ENCODE measurements at regions of chr22 and their contacts with region 1.

Region 1: DNA sequence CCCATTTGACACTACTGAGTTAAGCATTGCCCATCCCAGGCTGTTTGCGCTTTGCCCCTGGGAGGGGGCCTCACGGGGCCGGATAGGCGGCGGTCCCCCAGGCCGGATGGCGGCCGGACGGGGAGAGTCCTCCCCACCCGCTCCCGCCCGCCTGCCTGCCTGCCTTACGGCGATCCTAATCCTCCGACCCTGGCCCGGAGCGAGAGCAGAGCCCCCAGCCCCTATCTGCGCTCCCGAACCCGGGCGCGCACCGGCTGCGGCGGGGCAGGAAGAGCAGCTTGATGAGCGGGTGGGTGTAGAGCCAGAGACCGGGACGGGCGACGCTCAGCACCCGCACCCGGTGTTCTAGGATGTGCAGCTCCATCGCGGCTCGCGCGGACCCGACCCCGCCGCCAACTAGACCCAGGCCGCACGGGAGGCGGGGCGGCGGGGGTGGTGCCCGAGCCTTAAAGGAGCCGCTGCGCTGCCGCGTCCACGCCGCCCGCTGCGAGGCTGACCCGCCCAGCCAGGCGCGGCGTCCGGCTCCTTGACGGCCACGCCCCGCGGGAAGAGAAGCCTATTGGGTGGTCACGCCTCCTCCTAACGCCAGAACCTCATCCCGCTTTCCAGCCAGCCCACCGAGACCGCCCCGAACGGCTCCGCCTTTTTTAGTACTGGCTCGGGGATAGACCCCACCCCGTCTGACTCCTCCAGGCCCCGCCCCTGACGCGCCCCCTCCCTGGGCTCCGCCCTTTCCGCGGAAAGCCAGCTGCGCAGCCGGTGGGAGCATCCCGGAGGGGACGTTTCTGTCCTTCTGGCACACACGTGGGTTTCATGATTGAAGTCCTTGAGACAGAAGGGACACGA is at the start of gene CASTOR1:
- DNase-seq: peak; percentile 98
- H3K4me3 ChIP-seq: peak within 1 kb of the TSS; percentile 80
- H3K4me3 Mint-ChIP-seq: peak within 1 kb of the TSS; percentile 81
- H3K27ac Mint-ChIP-seq: peak within 1 kb of the TSS; percentile 77
- H3K4me1 ChIP-seq: peaks cover 4% of the 10 kb centered on the region
- H3K4me1 Mint-ChIP-seq: peaks cover 11% of the 10 kb centered on the region
- H3K27me3 ChIP-seq: no peaks in the 10 kb centered on the region
- H3K27me3 Mint-ChIP-seq: no peaks in the 10 kb centered on the region
- CTCF ChIP-seq: no peak
- total RNA-seq, gene CASTOR1: 6.3 and 7.4 TPM in 2 replicates

Region 2: DNA sequence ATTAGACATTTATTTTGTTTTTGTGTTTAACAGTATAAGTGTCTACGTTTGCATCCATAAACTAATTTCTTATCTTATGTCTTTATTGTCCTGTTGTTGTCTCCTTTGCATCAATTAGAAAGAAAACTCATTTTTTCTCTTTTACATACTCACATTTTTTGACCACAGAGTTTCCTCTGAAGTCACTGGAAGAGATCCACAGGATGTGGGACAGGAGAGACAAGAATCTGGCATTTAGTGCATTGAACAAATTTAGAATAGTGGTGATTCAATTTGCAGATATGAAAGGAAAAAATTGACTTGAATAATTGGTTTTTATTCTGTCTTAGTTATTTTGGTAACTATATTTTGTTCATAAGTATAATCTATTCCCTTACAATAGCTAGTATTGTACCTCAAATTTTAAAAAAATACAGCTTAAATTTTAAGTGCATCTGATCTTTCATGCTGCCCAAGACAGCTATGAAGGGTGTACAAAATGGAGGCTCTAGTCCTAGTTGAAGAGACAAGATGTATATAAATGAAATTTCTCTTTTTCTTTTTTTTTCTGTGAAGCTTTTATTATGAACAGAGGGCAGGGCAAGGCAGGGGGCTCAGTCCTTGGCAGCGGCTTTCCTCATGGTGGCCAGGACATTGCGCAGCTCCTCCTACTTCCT is 184.7 kb before region 1 on chr22:
- CTCF ChIA-PET with region 1: interaction called, 10 read pairs
- POLR2A ChIA-PET with region 1: no interaction called
- intact Hi-C with region 1: loop called (anchors 1 kb)
- DNase-seq: no peak
- H3K4me3 ChIP-seq: no peak overlapping the region
- H3K4me3 Mint-ChIP-seq: no peak overlapping the region
- H3K27ac Mint-ChIP-seq: no peak overlapping the region
- H3K4me1 ChIP-seq: no peaks in the 10 kb centered on the region
- H3K4me1 Mint-ChIP-seq: peaks cover 11% of the 10 kb centered on the region
- H3K27me3 ChIP-seq: no peaks in the 10 kb centered on the region
- H3K27me3 Mint-ChIP-seq: no peaks in the 10 kb centered on the region
- CTCF ChIP-seq: no peak

Region 3: GRCh38 chr22:30277547-30278344 is 11.6 kb before region 1 on chr22:
- CTCF ChIA-PET with region 1: interaction called, 12 read pairs
- POLR2A ChIA-PET with region 1: no interaction called
- intact Hi-C with region 1: no loop called
- DNase-seq: peak in 1 of 2 experiments; percentile 55
- H3K4me3 ChIP-seq: no peak overlapping the region
- H3K4me3 Mint-ChIP-seq: no peak overlapping the region
- H3K27ac Mint-ChIP-seq: peak overlapping the region; percentile 81
- H3K4me1 ChIP-seq: peaks cover 19% of the 10 kb centered on the region
- H3K4me1 Mint-ChIP-seq: peaks cover 11% of the 10 kb centered on the region
- H3K27me3 ChIP-seq: no peaks in the 10 kb centered on the region
- H3K27me3 Mint-ChIP-seq: no peaks in the 10 kb centered on the region
- CTCF ChIP-seq: no peak

Region 4: DNA sequence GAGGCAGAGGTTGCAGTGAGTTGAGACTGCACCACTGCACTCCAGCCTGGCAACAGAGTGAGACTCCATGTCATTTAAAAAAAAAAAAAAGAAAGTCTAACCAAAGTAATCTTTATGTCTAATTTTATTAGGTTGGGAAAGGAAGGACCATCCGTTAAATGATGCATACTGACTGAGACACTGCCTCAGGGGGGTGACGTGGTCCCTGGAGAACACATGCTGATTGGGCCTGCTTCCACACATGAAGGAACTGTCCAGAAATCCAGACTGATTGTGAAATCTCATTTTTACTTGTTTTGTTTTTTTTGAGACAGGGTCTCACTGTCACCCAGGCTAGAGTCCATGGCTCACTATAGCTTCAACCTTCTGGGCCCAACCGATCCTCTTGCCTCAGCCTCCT is 61.9 kb after region 1 on chr22:
- CTCF ChIA-PET with region 1: interaction called, 6 read pairs
- POLR2A ChIA-PET with region 1: interaction called, 5 read pairs
- intact Hi-C with region 1: loop called (anchors 5 kb)
- DNase-seq: no peak
- H3K4me3 ChIP-seq: no peak overlapping the region
- H3K4me3 Mint-ChIP-seq: peak overlapping the region; percentile 51
- H3K27ac Mint-ChIP-seq: peak overlapping the region; percentile 70
- H3K4me1 ChIP-seq: peaks cover 38% of the 10 kb centered on the region
- H3K4me1 Mint-ChIP-seq: peaks cover 35% of the 10 kb centered on the region
- H3K27me3 ChIP-seq: no peaks in the 10 kb centered on the region
- H3K27me3 Mint-ChIP-seq: no peaks in the 10 kb centered on the region
- CTCF ChIP-seq: no peak

Region 5: DNA sequence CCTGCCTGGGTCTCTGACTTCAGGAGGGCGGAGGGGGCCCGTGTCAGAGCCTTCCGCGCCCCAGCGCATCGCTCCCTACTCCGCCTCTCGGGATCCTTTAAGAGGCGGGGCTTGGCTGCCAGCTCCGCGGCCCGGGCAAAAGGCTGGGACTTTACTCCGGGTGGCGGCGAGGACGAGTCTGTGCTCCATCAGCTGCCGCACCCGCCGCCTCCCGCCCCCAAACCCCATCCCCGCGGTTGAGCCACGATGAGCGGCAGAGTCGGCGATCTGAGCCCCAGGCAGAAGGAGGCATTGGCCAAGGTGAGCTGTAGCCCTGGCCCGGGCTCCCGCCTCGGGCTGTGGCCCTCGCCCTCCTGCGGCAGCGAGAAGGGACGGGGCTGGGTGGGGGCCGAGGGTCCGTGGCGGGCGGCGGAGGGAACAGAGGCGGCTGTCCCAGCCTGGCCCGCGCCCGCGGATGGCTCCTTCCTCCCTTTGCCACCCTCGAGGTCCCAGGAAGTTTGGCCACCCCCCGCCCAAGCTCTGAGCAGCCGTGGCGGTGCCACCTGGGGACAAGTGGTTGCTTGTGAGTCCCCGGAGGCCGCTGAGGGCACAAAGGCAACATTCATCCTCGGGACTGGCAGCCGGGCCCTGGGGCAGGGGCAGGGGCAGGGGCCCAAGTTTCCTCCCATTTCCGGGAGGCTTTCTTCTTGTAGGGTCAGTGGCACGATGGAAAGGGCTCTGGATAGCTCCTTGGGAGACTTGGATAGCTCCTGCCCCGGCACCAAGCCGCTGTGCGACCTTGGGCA is 107.7 kb after region 1 on chr22 and contains the start of gene SEC14L2:
- CTCF ChIA-PET with region 1: interaction called, 20 read pairs
- POLR2A ChIA-PET with region 1: no interaction called
- intact Hi-C with region 1: no loop called
- DNase-seq: peak; percentile 57 to 63
- H3K4me3 ChIP-seq: peak within 1 kb of the TSS; percentile 87
- H3K4me3 Mint-ChIP-seq: peak within 1 kb of the TSS; percentile 76
- H3K27ac Mint-ChIP-seq: peak within 1 kb of the TSS; percentile 29
- H3K4me1 ChIP-seq: peaks cover 9% of the 10 kb centered on the region; the same call in 1 of the 2 replicates
- H3K4me1 Mint-ChIP-seq: peaks cover 14% of the 10 kb centered on the region
- H3K27me3 ChIP-seq: no peaks in the 10 kb centered on the region
- H3K27me3 Mint-ChIP-seq: no peaks in the 10 kb centered on the region
- CTCF ChIP-seq: no peak
- total RNA-seq, gene SEC14L2: 9.4 and 11.0 TPM in 2 replicates

Region 6: DNA sequence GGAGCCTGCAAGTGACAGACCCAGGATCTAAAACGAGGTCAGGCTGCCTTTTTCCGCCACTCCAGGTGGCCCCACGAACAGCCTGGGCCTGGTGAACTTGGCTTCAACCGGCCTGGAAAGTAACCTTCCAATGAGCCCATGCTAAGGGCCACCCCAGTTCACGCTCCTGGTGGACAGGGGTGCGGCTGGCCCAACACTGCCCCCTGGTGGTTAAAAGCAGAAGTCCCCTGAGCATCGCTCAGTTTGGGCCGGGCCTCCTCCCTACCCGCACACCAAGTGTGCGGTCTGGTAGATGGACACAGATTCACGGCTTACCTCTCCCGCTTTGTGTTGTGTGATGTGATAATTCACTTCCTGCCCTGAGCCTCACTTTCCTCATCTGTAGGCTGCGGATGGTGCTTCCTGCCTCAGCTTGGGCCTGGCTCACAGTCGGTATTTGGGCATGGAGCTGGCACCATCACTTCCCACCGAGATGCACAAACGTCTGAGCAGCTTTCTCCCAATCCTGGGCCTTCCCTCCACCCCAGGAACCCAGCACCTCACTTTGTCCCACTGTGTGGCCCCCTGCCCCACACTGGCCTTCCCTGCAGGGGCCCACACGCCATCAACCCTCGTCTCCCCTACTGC is 196.1 kb after region 1 on chr22:
- CTCF ChIA-PET with region 1: interaction called, 4 read pairs
- POLR2A ChIA-PET with region 1: no interaction called
- intact Hi-C with region 1: loop called (anchors 10 kb)
- DNase-seq: peak; percentile 62 to 82
- H3K4me3 ChIP-seq: no peak overlapping the region
- H3K4me3 Mint-ChIP-seq: no peak overlapping the region
- H3K27ac Mint-ChIP-seq: no peak overlapping the region
- H3K4me1 ChIP-seq: no peaks in the 10 kb centered on the region
- H3K4me1 Mint-ChIP-seq: no peaks in the 10 kb centered on the region
- H3K27me3 ChIP-seq: no peaks in the 10 kb centered on the region
- H3K27me3 Mint-ChIP-seq: peaks cover 5% of the 10 kb centered on the region
- CTCF ChIP-seq: peak; percentile 89 to 96

Measured in Caco-2 (cell line).